Activated CD4-positive, alpha-beta T cell treated with anti-CD3 and anti-CD28 coated beads, Interleukin-2, amount 10 ng/mL, durations not matched to agents 24 days and 14 days (primary cell): ENCODE measurements at regions of chr2 and their contacts with region 1.

Region 1: DNA sequence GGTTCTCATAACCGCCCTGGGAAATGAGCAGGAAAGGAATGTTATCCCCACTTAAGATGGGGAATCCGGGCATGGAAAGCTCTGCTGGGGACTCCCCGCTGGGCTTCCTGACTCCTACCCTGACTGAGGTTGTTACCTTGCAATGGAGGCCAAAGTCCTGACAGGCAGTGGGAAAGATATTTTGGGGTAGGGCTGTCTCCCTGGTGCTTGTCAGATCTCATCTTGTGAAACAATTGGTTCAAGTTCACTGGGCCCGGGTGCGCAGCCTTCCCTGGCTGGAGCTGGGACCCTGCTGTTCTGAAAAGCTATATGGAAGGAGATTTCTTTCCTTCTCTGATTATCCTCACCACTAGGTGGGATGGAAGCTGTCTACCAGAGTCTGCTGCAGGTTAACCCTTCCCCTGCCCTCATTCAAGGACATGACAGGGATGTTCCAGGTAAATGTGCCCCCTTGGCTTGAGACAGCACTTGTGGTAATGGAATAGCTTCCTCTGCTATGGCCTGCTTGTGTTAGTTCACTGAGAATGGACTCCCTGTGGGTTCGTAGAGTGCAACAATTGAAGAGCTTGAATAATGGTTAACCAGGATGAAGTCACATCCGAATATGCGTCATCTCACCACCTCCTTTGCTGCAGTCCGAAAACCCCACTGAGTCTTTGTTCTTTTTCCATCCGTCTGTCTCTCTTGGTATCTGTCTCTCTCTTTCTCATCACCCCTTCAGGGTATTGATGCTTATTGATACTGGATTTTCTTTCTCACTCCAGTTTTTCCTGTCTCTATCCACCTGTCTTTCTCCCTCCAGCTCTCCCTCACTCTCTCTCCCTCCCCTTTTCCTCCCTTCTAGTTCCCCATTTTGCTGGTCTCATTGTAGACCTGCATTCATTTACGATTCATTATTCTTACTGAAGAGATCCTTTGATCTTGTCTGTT is 67.8 kb upstream of the EPAS1 start:
- DNase-seq: peak; percentile 80
- H3K4me3 Mint-ChIP-seq: peak overlapping the region; percentile 56
- H3K27ac Mint-ChIP-seq: peak overlapping the region; percentile 86
- H3K4me1 Mint-ChIP-seq: peaks cover 30% of the 10 kb centered on the region
- H3K27me3 Mint-ChIP-seq: peaks cover 7% of the 10 kb centered on the region

Region 2: DNA sequence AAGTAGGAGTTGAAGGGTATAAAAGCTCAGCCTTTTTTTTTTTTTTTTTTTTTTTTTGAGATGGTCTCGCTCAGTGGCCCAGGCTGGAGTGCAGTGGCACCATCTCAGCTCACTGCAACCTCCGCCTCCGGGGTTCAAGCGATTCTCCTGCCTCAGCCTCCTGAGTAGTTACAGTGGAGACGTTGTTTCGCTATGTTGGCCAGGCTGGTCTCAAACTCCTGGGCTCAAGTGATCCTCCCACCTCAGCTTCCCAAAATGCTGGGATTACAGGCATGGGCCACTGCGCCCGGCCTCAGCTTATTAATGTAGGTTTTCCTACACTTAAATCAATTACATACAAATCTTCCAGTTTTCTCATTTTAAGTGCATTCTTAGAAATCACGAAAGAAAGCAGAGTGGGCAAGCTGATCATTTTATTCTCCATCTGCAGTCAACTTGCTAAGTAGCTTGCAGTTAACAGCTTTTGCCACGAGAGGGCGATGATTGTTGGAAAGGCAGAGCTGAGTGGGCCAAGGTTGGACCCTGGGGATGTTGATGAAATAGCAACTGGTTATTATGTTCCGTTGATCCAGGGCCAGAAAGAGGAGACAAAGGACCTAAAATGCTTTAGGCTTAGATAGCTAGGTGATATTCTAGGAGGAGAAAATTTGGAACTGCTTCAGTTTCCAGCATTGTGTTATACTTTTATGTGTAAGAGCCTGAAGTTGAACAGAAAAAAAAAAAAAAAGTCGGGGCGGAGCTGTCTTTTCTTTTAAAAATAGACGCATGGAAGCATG is 166.6 kb before region 1 on chr2:
- intact Hi-C with region 1: loop called (anchors 1 kb)
- DNase-seq: peak; percentile 92
- H3K4me3 Mint-ChIP-seq: no peak overlapping the region
- H3K27ac Mint-ChIP-seq: no peak overlapping the region
- H3K4me1 Mint-ChIP-seq: peaks cover 20% of the 10 kb centered on the region
- H3K27me3 Mint-ChIP-seq: no peaks in the 10 kb centered on the region

Region 3: DNA sequence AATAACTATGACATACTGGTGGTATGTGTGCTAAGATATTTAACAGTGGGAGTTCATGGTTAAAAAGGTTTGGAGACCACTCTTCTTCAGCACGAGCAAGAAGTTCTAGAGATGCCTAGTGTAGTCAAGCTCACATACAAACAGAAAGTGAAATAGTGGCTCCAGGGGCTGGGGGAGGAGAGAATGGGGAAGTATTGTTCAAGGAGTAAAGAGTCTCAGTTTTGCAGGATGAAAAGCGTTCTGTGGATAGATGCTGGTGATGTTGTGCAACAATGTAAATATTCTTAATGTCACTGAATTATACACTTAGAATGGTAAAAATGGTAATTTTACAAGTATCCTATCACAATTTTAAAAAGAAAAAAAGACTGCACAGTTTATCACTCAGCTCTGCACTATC is 38.8 kb after region 1 on chr2:
- intact Hi-C with region 1: loop called (anchors 5 kb)
- DNase-seq: peak; percentile 68
- H3K4me3 Mint-ChIP-seq: peak overlapping the region; percentile 36
- H3K27ac Mint-ChIP-seq: no peak overlapping the region
- H3K4me1 Mint-ChIP-seq: peaks cover 31% of the 10 kb centered on the region
- H3K27me3 Mint-ChIP-seq: peaks cover 14% of the 10 kb centered on the region

Region 4: GRCh38 chr2:46377176-46377581 is 147.8 kb after region 1 on chr2:
- intact Hi-C with region 1: no loop called
- DNase-seq: no peak
- H3K4me3 Mint-ChIP-seq: no peak overlapping the region
- H3K27ac Mint-ChIP-seq: no peak overlapping the region
- H3K4me1 Mint-ChIP-seq: no peaks in the 10 kb centered on the region
- H3K27me3 Mint-ChIP-seq: peaks cover 2% of the 10 kb centered on the region

Region 5: DNA sequence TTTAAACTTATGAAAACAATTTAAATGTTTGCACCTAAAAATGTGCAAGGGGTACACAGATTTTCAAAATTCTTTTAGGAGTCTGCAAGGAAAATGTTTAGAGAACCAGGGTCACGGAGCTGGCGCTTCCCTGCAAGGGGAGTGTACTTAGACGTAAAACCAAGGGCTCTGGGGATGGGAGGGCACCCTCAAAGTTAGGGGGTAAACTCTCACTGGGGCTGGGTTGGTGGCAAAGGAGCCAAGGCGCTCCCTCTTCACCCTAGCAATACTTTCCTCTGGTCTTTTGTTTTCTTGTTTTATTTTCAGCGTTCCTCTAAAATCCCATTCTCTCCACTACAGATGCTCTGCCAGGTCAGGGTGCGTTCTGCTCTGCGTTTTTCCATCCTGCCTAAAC is 270.0 kb after region 1 on chr2:
- intact Hi-C with region 1: no loop called
- DNase-seq: no peak
- H3K4me3 Mint-ChIP-seq: peak overlapping the region; percentile 84
- H3K27ac Mint-ChIP-seq: no peak overlapping the region
- H3K4me1 Mint-ChIP-seq: peaks cover 11% of the 10 kb centered on the region
- H3K27me3 Mint-ChIP-seq: peaks cover 29% of the 10 kb centered on the region